ENCODE measurements at regions of chr12 and their contacts with region 1.

Region 1: DNA sequence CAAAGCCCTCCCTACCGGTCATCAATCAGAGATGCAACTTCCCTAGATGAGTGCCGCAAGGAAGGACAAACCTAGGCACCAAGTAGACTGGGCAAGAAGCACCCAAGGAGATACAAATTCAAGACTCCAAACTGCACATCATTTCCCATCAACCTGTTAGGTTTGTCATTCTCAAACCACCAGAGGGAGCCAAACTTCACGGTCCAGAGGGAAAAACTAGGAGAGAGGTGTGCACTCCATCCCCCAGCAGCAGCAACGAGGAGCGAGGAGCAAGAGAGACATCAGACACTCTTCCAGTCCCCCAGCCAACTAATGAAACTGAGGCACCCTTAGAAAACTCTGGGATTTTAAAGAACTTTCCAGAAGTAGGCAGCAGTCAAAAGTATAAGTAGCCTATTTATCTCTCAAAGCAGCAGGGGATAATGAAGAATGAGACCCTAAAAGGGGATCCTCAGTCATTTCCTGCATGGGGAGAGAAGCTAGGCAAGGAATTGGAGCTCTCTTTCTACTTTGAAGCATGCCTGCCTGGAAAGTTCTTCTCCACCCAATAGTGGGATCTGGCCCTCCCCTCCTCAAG is 37.0 kb upstream of the NT5DC3 start:
- DNase-seq: peak in 2 of 4 donors; percentile 36 to 61
- ATAC-seq: peak; percentile 91
- H3K4me3 ChIP-seq: no peak overlapping the region
- H3K27ac ChIP-seq: no peak overlapping the region
- H3K4me1 ChIP-seq: no peaks in the 10 kb centered on the region
- H3K27me3 ChIP-seq: no peaks in the 10 kb centered on the region
- CTCF ChIP-seq: peak; percentile 45 to 56

Region 2: GRCh38 chr12:104108755-104109445 is 230.9 kb after region 1 on chr12:
- intact Hi-C with region 1: loop called in 1 of 2 experiments (anchors 5 kb)
- DNase-seq: peak; percentile 56 to 81 (median 73)
- ATAC-seq: peak; percentile 95
- H3K4me3 ChIP-seq: no peak overlapping the region
- H3K27ac ChIP-seq: no peak overlapping the region
- H3K4me1 ChIP-seq: peaks cover 0 to 12% of the 10 kb centered on the region in 2 donors
- H3K27me3 ChIP-seq: no peaks in the 10 kb centered on the region
- CTCF ChIP-seq: peak; percentile 86 to 87